Activated CD4-positive, alpha-beta T cell treated with anti-CD3 and anti-CD28 coated beads, Interleukin-2, amount 10 ng/mL, durations not matched to agents 7 days and 5 days (primary cell): ENCODE measurements at regions of chr5 and their contacts with region 1.

Region 1: DNA sequence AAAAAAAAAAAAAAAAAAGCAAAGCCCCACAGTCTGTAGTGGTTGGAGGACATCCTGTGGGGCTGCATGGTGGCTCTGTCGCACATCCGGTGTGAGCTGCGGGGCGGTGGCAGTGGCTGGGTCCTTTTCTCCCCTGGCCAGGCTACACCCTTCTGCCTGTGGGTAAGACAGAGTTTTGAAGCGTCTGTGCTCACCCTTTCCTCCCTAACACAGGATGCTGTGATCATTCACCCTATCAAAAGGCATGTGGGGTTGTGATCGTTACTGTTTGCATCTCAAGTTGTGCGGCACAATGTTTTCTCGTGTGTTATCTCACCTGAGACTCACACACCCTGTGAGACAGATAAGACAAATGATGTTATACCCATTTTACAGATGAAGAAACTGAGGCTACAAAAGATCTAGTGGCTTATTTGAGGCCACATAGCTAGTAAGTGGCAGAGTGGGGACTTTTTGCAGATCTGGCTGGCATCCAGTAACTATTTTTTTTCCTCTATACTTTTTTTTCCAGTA is 17.5 kb downstream of the IRF1 start:
- DNase-seq: peak; percentile 92
- H3K4me3 Mint-ChIP-seq: peak overlapping the region; percentile 31
- H3K27ac Mint-ChIP-seq: peak overlapping the region; percentile 92
- H3K4me1 Mint-ChIP-seq: peaks cover 87% of the 10 kb centered on the region
- H3K27me3 Mint-ChIP-seq: no peaks in the 10 kb centered on the region

Region 2: GRCh38 chr5:132180134-132180745 is 292.8 kb before region 1 on chr5:
- CTCF ChIA-PET with region 1: no interaction called
- POLR2A ChIA-PET with region 1: no interaction called
- DNase-seq: peak; percentile 11
- H3K4me3 Mint-ChIP-seq: no peak overlapping the region
- H3K27ac Mint-ChIP-seq: no peak overlapping the region
- H3K4me1 Mint-ChIP-seq: peaks cover 39% of the 10 kb centered on the region
- H3K27me3 Mint-ChIP-seq: no peaks in the 10 kb centered on the region

Region 3: GRCh38 chr5:132410451-132411381 is 62.4 kb before region 1 on chr5:
- CTCF ChIA-PET with region 1: interaction called, 15 read pairs
- POLR2A ChIA-PET with region 1: interaction called, 13 read pairs
- DNase-seq: peak; percentile 92
- H3K4me3 Mint-ChIP-seq: peak overlapping the region; percentile 98
- H3K27ac Mint-ChIP-seq: peak overlapping the region; percentile 99
- H3K4me1 Mint-ChIP-seq: peaks cover 67% of the 10 kb centered on the region
- H3K27me3 Mint-ChIP-seq: no peaks in the 10 kb centered on the region

Region 4: DNA sequence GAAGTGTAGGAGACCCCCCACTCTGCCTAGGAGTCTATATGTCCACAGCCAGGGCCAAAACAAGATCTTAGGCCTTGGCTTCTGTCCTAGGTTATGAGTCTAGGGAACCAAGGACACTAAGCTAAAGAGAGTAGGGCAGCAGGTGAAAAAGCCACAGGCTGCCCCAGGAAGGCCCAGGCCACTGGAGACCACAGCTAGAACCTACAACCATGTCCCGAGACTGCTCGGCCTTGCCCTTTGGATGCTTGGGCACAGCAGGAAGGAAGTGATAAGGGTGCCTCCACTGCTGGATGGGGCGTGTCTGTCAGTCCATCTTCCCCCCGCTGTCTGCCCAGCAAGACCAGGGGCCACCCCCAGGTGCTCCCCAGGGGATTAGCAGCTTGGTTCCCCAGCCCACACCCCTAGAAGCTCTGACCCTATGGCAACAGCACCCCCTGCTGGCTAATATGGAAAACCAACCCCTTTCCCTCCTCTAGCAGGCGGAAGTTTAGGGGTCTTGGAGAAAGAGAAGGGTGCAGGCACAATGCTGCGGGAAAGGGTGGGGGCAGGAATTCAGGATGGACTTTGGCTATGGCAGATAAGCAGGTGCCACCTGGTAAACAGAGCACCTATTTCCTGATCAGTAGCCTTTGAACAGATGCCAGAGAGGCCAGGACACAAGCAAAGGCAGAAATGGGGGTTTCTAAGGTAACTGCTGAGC is 28.0 kb after region 1 on chr5:
- CTCF ChIA-PET with region 1: interaction called, 14 read pairs
- POLR2A ChIA-PET with region 1: no interaction called
- DNase-seq: peak; percentile 82
- H3K4me3 Mint-ChIP-seq: no peak overlapping the region
- H3K27ac Mint-ChIP-seq: peak overlapping the region; percentile 60
- H3K4me1 Mint-ChIP-seq: peaks cover 44% of the 10 kb centered on the region
- H3K27me3 Mint-ChIP-seq: peaks cover 3% of the 10 kb centered on the region

Region 5: GRCh38 chr5:132556763-132557477 is 83.8 kb after region 1 on chr5 and contains the start of gene RAD50:
- CTCF ChIA-PET with region 1: no interaction called
- POLR2A ChIA-PET with region 1: no interaction called
- DNase-seq: peak; percentile 94
- H3K4me3 Mint-ChIP-seq: peak within 1 kb of the TSS; percentile 97
- H3K27ac Mint-ChIP-seq: peak within 1 kb of the TSS; percentile 97
- H3K4me1 Mint-ChIP-seq: peaks cover 27% of the 10 kb centered on the region
- H3K27me3 Mint-ChIP-seq: no peaks in the 10 kb centered on the region
- total RNA-seq, gene RAD50: 33.3 to 38.5 TPM